ENCODE measurements at regions of chr1 and their contacts with region 1.

Region 1: GRCh38 chr1:145845514-145846161 is at the start of gene NUDT17:
- DNase-seq: peak; percentile 88
- ATAC-seq: peak; percentile 78
- H3K4me3 Mint-ChIP-seq: no peak within 1 kb of the TSS
- H3K27ac Mint-ChIP-seq: no peak within 1 kb of the TSS
- H3K4me1 Mint-ChIP-seq: peaks cover 3% of the 10 kb centered on the region; the same call in 1 of the 2 replicates
- H3K27me3 Mint-ChIP-seq: no peaks in the 10 kb centered on the region
- CTCF ChIP-seq: peak; percentile 82
- total RNA-seq, gene NUDT17: 2.7 to 3.5 TPM (median 3.3 TPM) in 3 replicates

Region 2: DNA sequence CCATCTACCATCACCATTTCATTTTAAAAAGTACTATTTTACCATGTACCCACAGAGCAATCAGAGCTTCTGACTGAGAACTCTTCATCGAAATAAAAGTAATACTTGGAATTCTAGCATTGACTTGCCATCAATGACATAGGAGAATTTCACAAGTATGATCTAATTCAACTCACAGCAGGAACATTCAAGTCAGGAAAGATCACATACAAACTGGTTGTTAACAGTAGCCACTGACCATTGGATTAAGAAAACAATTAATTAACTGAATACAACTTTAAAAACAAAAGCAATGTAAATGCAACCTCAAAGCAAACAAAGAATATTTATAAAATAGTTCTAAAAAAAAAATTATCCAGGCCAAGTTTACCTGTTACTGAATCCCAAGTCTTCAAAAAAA is 40.6 kb before region 1 on chr1:
- CTCF ChIA-PET with region 1: interaction called, 10 read pairs
- POLR2A ChIA-PET with region 1: no interaction called
- DNase-seq: no peak
- ATAC-seq: no peak
- H3K4me3 Mint-ChIP-seq: no peak overlapping the region
- H3K27ac Mint-ChIP-seq: peak overlapping the region; percentile 85
- H3K4me1 Mint-ChIP-seq: peaks cover 34% of the 10 kb centered on the region
- H3K27me3 Mint-ChIP-seq: no peaks in the 10 kb centered on the region; the same call in 1 of the 2 replicates
- CTCF ChIP-seq: no peak

Region 3: DNA sequence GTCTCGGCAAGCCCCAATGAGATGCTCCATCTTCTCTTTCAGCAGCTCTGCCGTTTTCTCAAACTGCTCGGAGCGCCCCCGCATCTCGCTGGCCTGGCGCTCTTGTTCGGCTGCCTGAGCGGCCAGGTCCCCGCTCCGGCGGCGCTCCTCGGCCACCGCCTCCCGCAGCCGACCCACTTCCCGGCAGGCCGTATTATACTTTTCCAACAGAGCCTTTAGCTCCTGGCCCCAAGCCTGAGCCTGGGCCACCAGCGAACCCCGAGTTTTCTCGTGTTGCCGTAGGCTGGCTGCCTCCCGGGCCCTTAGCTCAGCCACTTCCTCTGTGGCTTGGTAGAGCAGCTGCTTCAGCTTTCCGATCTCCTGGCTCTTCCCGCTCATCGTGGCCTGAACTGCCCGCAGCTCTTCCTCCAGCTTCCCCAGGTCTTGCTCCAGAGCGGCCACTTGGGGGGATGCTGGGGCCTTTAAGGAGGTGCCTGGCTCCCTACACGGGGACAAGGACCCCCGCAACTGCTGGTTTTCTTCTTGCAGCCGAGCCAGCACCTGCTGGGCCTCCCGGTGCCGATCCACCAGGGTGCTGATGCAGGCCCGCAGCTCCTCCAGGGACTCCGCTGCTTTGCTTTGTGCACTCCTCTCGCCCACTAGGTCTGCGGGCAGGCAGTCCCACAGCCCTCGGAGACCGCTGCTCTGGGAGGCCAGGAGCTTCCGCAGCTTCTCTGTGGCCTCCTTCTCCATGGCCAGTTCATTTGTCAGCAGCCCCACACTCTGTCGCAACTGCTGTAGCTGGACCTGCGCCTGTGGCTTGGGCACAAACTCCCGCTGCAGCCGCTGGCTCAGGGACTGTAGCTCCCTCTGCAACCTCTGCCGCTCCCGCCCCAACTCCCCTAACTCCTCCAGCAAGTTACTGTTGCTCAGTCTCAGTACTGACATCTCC is 26.6 kb after region 1 on chr1:
- CTCF ChIA-PET with region 1: interaction called, 47 read pairs
- POLR2A ChIA-PET with region 1: no interaction called
- DNase-seq: peak; percentile 57
- ATAC-seq: peak; percentile 76
- H3K4me3 Mint-ChIP-seq: peak overlapping the region; percentile 69
- H3K27ac Mint-ChIP-seq: no peak overlapping the region; the same call in 1 of the 2 replicates
- H3K4me1 Mint-ChIP-seq: peaks cover 37% of the 10 kb centered on the region
- H3K27me3 Mint-ChIP-seq: peaks cover 39% of the 10 kb centered on the region
- CTCF ChIP-seq: no peak

Region 4: DNA sequence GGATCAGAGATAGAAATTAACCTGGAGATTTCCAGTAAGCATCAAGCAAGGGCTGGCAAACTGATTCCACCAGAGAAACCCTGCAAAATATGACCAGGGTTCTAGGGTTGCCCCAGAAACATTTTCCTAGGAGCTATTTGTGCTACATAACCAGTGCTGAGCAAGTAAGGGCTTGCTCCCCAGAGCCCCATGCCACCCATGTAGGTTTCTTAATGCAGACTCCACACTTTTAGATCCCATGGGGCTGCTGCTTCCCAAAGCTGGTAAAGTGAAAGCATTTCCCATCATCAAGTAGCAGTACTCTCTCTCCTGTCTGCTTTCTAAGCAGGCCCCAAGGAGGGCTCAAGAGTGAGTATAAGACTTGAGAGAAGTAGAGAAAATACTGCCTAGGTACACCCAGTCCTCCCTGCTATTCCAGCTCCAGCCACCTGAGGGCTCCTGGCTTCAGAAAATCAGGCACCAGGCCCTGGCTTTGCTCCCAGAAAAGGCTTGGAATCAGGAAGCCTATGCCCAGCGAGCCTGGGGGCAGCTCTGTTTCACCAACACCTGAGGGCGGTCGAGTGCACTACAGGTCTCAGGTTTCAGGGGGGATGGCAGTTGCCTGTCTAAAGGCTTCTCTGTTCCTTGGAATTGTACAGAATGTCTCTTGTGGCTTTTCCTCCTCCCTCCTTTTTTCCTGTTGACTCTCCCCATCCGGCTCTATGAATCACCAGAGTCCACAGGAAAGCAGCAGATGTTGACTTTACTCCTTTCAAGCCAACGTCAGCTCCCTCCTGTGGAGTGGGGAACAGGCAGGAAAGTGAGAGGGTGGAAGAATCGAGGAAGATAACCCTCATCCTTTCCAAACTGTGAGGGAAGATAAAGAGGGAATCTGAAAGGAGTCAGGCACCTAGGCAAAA is 46.2 kb after region 1 on chr1:
- CTCF ChIA-PET with region 1: interaction called, 50 read pairs
- POLR2A ChIA-PET with region 1: interaction called, 5 read pairs
- DNase-seq: peak; percentile 98
- ATAC-seq: peak; percentile 100
- H3K4me3 Mint-ChIP-seq: peak overlapping the region; percentile 62
- H3K27ac Mint-ChIP-seq: peak overlapping the region; percentile 95
- H3K4me1 Mint-ChIP-seq: peaks cover 25% of the 10 kb centered on the region
- H3K27me3 Mint-ChIP-seq: peaks cover 15% of the 10 kb centered on the region
- CTCF ChIP-seq: peak; percentile 85

Region 5: GRCh38 chr1:145918144-145918992 is 72.7 kb after region 1 on chr1 and contains the start of gene PEX11B:
- CTCF ChIA-PET with region 1: interaction called, 11 read pairs
- POLR2A ChIA-PET with region 1: no interaction called
- DNase-seq: peak; percentile 87
- ATAC-seq: peak; percentile 89
- H3K4me3 Mint-ChIP-seq: peak within 1 kb of the TSS; percentile 86
- H3K27ac Mint-ChIP-seq: peak within 1 kb of the TSS; percentile 78
- H3K4me1 Mint-ChIP-seq: peaks cover 19% of the 10 kb centered on the region
- H3K27me3 Mint-ChIP-seq: peaks cover 10% of the 10 kb centered on the region
- CTCF ChIP-seq: no peak
- total RNA-seq, gene PEX11B: 10.9 to 12.5 TPM (median 11.8 TPM) in 3 replicates

Region 6: GRCh38 chr1:145963995-145964901 is 118.6 kb after region 1 on chr1 and contains the starts of genes ANKRD34A and POLR3GL:
- CTCF ChIA-PET with region 1: interaction called, 11 read pairs
- POLR2A ChIA-PET with region 1: no interaction called
- DNase-seq: peak; percentile 96
- ATAC-seq: peak; percentile 85
- H3K4me3 Mint-ChIP-seq: peak within 1 kb of the TSS; percentile 91
- H3K27ac Mint-ChIP-seq: peak within 1 kb of the TSS; percentile 68; the same call in 1 of the 2 replicates
- H3K4me1 Mint-ChIP-seq: peaks cover 38% of the 10 kb centered on the region
- H3K27me3 Mint-ChIP-seq: peaks cover 70% of the 10 kb centered on the region
- CTCF ChIP-seq: no peak
- total RNA-seq, gene ANKRD34A: 0.21 to 0.44 TPM (median 0.22 TPM) in 3 replicates
- total RNA-seq, gene POLR3GL: 3.8 to 8.3 TPM (median 6.7 TPM) in 3 replicates

Region 7: GRCh38 chr1:146012737-146013403 is 167.2 kb after region 1 on chr1:
- CTCF ChIA-PET with region 1: interaction called, 29 read pairs
- POLR2A ChIA-PET with region 1: no interaction called
- DNase-seq: no peak
- ATAC-seq: no peak
- H3K4me3 Mint-ChIP-seq: no peak overlapping the region
- H3K27ac Mint-ChIP-seq: no peak overlapping the region
- H3K4me1 Mint-ChIP-seq: no peaks in the 10 kb centered on the region
- H3K27me3 Mint-ChIP-seq: peaks cover 21% of the 10 kb centered on the region
- CTCF ChIP-seq: no peak

Measured in WTC11 (cell line).